ENCODE measurements at regions of chr13 and their contacts with region 1.

Region 1: GRCh38 chr13:99666146-99666805 is 165.0 kb downstream of the TM9SF2 start:
- DNase-seq: no peak
- H3K4me3 ChIP-seq: no peak overlapping the region
- H3K27ac ChIP-seq: no peak overlapping the region
- H3K4me1 ChIP-seq: no peaks in the 10 kb centered on the region
- H3K27me3 ChIP-seq: no peaks in the 10 kb centered on the region
- CTCF ChIP-seq: no peak

Region 2: GRCh38 chr13:99895223-99895994 is 229.1 kb after region 1 on chr13:
- CTCF ChIA-PET with region 1: interaction called, 14 read pairs
- dilution Hi-C with region 1: no loop called
- in situ Hi-C with region 1: no loop called
- intact Hi-C with region 1: no loop called
- DNase-seq: no peak
- H3K4me3 ChIP-seq: peak overlapping the region in 1 of 3 experiments; percentile 18
- H3K27ac ChIP-seq: no peak overlapping the region
- H3K4me1 ChIP-seq: peaks cover 4% of the 10 kb centered on the region
- H3K27me3 ChIP-seq: peaks cover 24% of the 10 kb centered on the region
- CTCF ChIP-seq: no peak